Tibial artery (tissue), 4 donors: ENCODE measurements at regions of chr15 and their contacts with region 1.

Region 1: DNA sequence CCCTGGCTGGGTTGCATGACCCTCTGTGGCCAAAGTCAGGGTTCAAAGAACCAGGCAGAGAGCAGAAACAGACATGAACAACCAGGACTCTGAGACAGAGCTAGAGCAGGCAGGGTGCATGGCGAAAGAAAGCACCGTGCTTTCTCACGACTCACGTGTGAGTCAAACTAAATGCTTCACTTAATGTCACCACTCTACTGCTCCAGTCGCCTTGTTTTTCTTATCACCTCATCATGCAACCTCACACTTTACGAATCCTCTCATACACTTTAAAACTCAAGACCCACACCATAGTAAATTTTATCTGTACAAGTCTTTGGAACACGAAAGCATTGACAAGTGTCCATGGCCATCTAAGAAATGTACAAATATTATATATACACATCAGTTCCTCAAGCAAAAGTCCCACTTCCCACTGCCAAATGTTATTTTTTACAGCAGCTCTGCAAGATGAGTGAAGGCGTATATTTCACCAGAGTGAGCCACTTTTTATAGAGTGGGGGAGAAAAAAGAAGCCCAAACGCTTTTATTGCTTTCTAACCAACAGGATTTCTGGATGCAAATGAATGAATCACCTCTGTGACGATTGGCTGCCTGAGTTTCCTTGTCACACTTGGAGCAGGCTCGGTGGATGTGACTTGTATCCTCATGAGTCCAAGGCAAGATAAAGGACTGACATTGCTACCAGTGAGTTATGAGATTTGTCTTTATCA is 15.9 kb upstream of the MEGF11 start:
- DNase-seq: no peak
- H3K4me3 ChIP-seq: no peak overlapping the region
- H3K27ac ChIP-seq: no peak overlapping the region
- H3K4me1 ChIP-seq: peaks cover 0 to 13% (median 2%) of the 10 kb centered on the region in 4 donors
- H3K27me3 ChIP-seq: no peaks in the 10 kb centered on the region
- CTCF ChIP-seq: no peak

Region 2: GRCh38 chr15:65916664-65917406 is 352.6 kb before region 1 on chr15:
- intact Hi-C with region 1: loop called (anchors 10 kb)
- DNase-seq: peak; percentile 31 to 74
- H3K4me3 ChIP-seq: peak overlapping the region in 1 of 2 donors; percentile 10
- H3K27ac ChIP-seq: no peak overlapping the region
- H3K4me1 ChIP-seq: peaks cover 0 to 12% (median 11%) of the 10 kb centered on the region in 4 donors
- H3K27me3 ChIP-seq: no peaks in the 10 kb centered on the region
- CTCF ChIP-seq: peak; percentile 61 to 62